ENCODE measurements at regions of chr10 and their contacts with region 1.

Region 1: GRCh38 chr10:67788025-67788886 is 49.7 kb downstream of the DNAJC12 start:
- DNase-seq: peak; percentile 94
- ATAC-seq: peak; percentile 89
- H3K4me3 ChIP-seq: no peak overlapping the region
- H3K27ac ChIP-seq: no peak overlapping the region
- H3K4me1 ChIP-seq: peaks cover 8% of the 10 kb centered on the region; the same call in 1 of the 2 replicates
- H3K27me3 ChIP-seq: no peaks in the 10 kb centered on the region
- CTCF ChIP-seq: peak; percentile 99

Region 2: DNA sequence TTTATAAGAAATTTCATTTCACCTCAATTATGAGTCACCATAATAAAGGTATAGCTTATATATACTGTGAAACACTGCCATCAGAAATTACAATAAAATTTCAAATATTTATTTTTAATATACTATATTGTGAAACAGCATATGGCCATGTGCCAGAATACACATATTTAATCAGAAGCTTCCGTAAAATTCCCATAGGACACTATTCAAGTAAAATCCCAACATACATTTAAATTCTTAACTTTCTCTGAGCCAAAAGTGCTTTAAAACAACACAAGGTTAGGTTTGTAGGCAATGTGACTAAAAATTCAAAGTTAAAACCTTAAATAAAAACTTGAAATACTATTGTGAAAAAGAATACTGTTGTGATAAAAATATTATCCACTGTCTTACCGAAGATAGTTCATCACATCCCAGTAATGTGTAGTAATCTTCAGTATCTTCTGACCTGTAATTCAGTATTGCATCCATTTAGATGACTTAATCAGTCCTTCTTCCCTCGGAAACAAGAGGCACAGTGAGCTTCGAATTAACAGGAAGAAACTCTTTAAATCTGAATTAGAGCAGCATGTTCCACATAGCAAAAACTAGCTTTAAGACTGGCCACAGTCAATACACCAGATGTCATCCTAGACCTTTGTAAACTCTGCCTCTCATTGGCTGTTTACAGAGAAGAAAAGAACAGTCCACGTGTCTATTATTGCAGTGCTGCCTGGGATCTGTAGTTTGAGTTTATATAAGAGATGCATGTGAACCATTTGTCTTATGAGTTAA is 49.5 kb after region 1 on chr10 and contains the start of gene DNAJC12:
- CTCF ChIA-PET with region 1: interaction called, 9 read pairs
- POLR2A ChIA-PET with region 1: no interaction called
- intact Hi-C with region 1: loop called (anchors 1 kb)
- DNase-seq: peak; percentile 78
- ATAC-seq: peak; percentile 85
- H3K4me3 ChIP-seq: peak within 1 kb of the TSS; percentile 42
- H3K27ac ChIP-seq: peak within 1 kb of the TSS; percentile 63
- H3K4me1 ChIP-seq: peaks cover 34% of the 10 kb centered on the region
- H3K27me3 ChIP-seq: no peaks in the 10 kb centered on the region
- CTCF ChIP-seq: no peak
- total RNA-seq, gene DNAJC12: 14.2 and 15.5 TPM in 2 replicates

Region 3: GRCh38 chr10:67875340-67876238 is 87.3 kb after region 1 on chr10:
- CTCF ChIA-PET with region 1: no interaction called
- POLR2A ChIA-PET with region 1: no interaction called
- intact Hi-C with region 1: no loop called
- DNase-seq: no peak
- ATAC-seq: no peak
- H3K4me3 ChIP-seq: no peak overlapping the region
- H3K27ac ChIP-seq: no peak overlapping the region
- H3K4me1 ChIP-seq: no peaks in the 10 kb centered on the region
- H3K27me3 ChIP-seq: no peaks in the 10 kb centered on the region
- CTCF ChIP-seq: no peak

Region 4: GRCh38 chr10:68196701-68197100 is 408.4 kb after region 1 on chr10:
- CTCF ChIA-PET with region 1: no interaction called
- POLR2A ChIA-PET with region 1: no interaction called
- intact Hi-C with region 1: no loop called
- DNase-seq: no peak
- ATAC-seq: no peak
- H3K4me3 ChIP-seq: no peak overlapping the region
- H3K27ac ChIP-seq: no peak overlapping the region
- H3K4me1 ChIP-seq: peaks cover 10% of the 10 kb centered on the region
- H3K27me3 ChIP-seq: no peaks in the 10 kb centered on the region
- CTCF ChIP-seq: no peak

Measured in PC-3 (cell line).